Heart right ventricle (tissue), 16 donors: ENCODE measurements at regions of chr21 and their contacts with region 1.

Region 1: DNA sequence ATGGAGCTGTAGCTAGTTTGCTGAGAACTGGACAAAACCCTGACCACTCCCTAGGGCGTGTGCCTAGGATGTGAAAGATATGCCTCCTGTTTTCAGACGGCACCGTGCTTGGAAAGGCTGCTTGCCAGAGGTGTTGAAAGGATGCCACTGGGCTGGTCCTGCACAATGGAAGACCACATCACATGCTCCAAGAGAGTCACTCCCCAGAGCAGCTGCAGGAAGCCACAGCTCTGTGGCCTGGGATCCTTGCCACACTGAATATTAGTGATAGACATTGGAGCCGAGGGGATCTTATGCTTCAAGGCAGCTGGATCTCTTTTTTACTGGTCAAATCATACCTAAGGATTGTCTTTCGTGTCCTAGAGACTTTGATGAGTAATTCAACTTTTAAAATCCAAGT is 6.6 kb upstream of the APP start:
- DNase-seq: peak; percentile 22 to 28
- ATAC-seq: peak; percentile 47 to 81 (median 72)
- H3K4me3 ChIP-seq: no peak overlapping the region
- H3K27ac ChIP-seq: no peak overlapping the region
- H3K4me1 ChIP-seq: peaks cover 0 to 12% (median 8%) of the 10 kb centered on the region in 9 donors
- H3K27me3 ChIP-seq: no peaks in the 10 kb centered on the region
- CTCF ChIP-seq: no peak

Region 2: DNA sequence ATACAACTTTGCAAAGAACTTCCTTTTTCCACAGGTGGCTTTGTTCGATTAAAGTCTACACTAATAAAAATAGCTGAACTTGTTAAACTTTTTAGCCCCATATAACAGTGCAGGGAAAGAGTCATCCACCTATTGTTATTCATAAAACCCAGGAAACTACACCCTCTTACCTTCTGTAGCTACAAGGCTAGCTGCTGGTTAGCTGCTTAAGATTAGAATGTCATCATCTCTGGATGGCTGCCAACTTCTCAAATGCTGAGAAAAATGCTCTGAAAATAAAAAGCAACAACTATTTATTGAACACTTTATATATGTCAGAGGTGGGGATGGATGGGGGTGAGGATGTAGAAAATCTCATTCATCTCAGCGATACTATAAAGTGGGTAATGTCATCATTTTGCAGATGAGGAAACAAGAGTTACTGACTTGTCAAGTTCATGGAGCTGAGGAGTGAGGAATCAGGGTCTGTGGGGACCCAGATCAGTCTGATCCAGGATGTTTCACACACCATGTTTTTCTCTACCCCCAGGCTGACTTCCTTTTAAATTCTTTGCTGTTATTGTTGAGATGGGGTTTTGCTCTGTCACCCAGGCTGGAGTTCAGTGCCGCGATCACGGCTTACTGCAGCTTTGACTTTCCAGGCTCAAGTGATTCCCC is 459.6 kb before region 1 on chr21:
- intact Hi-C with region 1: no loop called
- DNase-seq: peak in 1 of 2 donors; percentile 45
- ATAC-seq: peak in 7 of 8 donors; percentile 70 to 94 (median 84)
- H3K4me3 ChIP-seq: no peak overlapping the region
- H3K27ac ChIP-seq: peak overlapping the region in 8 of 10 donors; percentile 45 to 77 (median 60)
- H3K4me1 ChIP-seq: peaks cover 0 to 47% (median 16%) of the 10 kb centered on the region in 9 donors
- H3K27me3 ChIP-seq: no peaks in the 10 kb centered on the region
- CTCF ChIP-seq: no peak

Region 3: GRCh38 chr21:25887166-25887565 is 290.0 kb before region 1 on chr21:
- intact Hi-C with region 1: loop called in 8 of 10 experiments (anchors 5 kb)
- DNase-seq: no peak
- ATAC-seq: no peak
- H3K4me3 ChIP-seq: no peak overlapping the region
- H3K27ac ChIP-seq: no peak overlapping the region
- H3K4me1 ChIP-seq: peaks cover 0 to 30% (median 12%) of the 10 kb centered on the region in 9 donors
- H3K27me3 ChIP-seq: no peaks in the 10 kb centered on the region
- CTCF ChIP-seq: no peak